ENCODE measurements at regions of chr3 and their contacts with region 1.

Region 1: GRCh38 chr3:50611464-50612233 is at the start of gene CISH:
- DNase-seq: peak; percentile 78 to 83
- ATAC-seq: peak; percentile 65 to 87
- H3K4me3 ChIP-seq: peak within 1 kb of the TSS; percentile 50
- H3K27ac ChIP-seq: peak within 1 kb of the TSS; percentile 72 to 89
- H3K4me1 ChIP-seq: peaks cover 9% of the 10 kb centered on the region
- CTCF ChIP-seq: peak; percentile 15; the same call in 1 of the 3 replicates
- EP300 ChIP-seq: no peak
- POLR2A ChIP-seq: peak; percentile 43; the same call in 1 of the 2 replicates
- RAD21 ChIP-seq: no peak
- polyA plus RNA-seq, gene CISH: 0.43 and 0.95 TPM in 2 replicates

Region 2: DNA sequence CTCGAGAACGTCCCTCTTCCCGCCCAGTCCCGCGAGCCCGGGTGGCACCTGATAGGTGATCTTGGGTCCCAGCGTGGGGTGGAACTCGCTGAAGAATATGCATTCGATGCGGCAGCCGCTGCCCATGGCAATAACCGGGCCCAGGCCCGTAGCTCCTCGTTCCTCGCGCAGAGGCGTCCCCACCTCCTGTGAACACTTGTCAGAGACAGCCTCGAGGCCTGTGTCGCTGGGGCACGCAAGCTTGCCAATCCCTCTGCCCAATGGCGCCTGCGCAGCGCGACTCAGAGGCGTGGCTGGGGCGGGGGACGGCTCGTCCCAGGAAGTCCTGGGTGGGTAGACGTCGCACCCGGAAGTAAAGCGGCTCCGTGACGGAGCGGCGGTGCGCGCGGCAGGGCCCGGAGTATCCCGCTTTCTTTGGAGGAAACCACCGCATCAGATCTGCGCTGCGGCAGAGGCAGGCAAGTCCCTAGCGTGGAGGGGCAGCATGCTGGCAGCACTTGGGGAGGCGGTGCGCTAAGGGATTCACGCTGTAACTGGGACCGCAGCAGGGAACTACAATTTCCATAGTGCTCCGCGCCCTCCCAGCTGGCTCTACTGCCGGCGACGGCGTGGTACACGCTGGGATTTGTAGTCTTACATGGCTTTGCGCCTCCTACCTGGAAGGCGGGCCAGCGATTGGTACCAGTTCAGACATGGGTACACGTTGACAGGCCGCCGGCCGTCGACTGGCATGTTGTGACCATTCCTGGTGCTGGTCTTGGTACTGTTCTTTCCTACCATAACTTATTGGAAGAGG is 260.9 kb before region 1 on chr3 and contains the starts of genes CYB561D2 and NPRL2:
- CTCF ChIA-PET with region 1: interaction called, 32 read pairs
- POLR2A ChIA-PET with region 1: no interaction called
- DNase-seq: peak; percentile 92
- ATAC-seq: peak; percentile 86 to 91
- H3K4me3 ChIP-seq: peak within 1 kb of the TSS; percentile 76
- H3K27ac ChIP-seq: peak within 1 kb of the TSS; percentile 97 to 100
- H3K4me1 ChIP-seq: peaks cover 28% of the 10 kb centered on the region; the same call in 2 of the 3 replicates
- CTCF ChIP-seq: no peak
- EP300 ChIP-seq: no peak
- POLR2A ChIP-seq: peak; percentile 68
- RAD21 ChIP-seq: no peak
- polyA plus RNA-seq, gene CYB561D2: 14.4 and 23.1 TPM in 2 replicates
- polyA plus RNA-seq, gene NPRL2: 19.9 and 28.5 TPM in 2 replicates

Region 3: DNA sequence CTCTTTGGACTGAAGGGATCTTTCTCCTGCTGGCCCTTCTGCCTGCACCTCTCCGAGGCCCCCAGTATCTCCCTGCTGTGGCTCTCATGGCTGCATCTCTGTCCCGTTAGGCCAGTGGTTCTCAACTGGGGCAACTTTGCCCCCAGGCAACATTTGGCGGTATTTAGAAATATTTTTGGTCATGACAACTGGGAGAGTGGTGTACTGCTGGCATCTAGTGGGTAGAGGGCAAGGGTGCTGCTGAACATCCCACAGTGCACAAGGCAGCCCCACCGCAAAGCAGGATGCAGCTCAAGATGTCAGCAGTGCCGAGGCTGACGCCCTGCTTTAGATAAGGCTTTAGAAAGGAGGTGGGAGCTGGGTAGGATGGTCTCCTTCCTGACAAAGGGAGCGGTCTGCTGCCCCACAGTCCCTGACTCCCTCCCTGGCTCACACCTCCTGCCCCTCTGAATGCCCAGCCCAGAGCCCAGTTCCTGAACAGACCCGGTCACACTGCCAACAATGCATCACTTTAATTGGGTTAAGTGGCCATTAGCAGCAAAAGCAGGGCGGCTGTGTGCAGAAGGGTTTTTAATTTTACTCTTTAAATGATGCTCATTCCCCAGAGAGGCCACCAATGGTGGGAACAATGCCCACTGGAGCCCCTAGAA is 183.5 kb before region 1 on chr3:
- CTCF ChIA-PET with region 1: no interaction called
- POLR2A ChIA-PET with region 1: no interaction called
- DNase-seq: peak in 1 of 2 experiments; percentile 11
- ATAC-seq: peak in 1 of 2 experiments; percentile 56; a peak in 2 of 6 replicates
- H3K4me3 ChIP-seq: no peak overlapping the region
- H3K27ac ChIP-seq: no peak overlapping the region
- H3K4me1 ChIP-seq: no peaks in the 10 kb centered on the region
- CTCF ChIP-seq: no peak
- EP300 ChIP-seq: no peak
- POLR2A ChIP-seq: no peak
- RAD21 ChIP-seq: 0 out of 5 replicates have a peak, but pooled peaks of 1 of the 2 experiments have one; percentile 6

Region 4: DNA sequence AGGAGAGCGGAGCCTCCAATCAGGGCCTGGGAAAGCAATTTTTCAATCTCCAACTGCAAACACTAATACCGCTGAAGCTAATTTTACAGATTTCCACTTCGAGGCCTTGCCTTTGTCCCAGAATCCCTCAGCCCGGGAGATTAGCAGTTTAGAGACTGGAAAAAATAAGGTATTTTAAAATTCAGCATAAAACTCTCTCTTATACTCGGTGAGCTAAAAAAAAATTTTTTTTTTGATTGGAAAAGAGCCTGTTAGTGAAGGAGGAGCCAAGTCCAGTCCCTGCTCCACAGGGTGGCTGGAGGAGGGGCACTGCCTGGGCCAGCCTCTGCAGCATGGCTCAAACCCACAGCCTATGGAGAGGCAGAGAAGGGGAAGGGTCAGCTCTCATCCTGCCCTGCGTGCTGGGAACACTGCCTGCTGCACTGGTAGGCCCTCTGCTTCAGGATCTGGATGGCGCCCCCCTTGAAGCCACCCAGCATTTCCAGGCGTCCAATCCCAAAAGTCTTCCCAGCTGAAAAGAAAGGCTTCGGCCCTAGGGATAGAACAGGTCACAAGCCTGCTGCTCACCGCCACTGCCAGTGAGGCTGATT is 157.1 kb before region 1 on chr3:
- CTCF ChIA-PET with region 1: no interaction called
- POLR2A ChIA-PET with region 1: no interaction called
- DNase-seq: no peak
- ATAC-seq: 0 out of 6 replicates have a peak, but pooled peaks of 1 of the 2 experiments have one; percentile 34
- H3K4me3 ChIP-seq: no peak overlapping the region
- H3K27ac ChIP-seq: no peak overlapping the region
- H3K4me1 ChIP-seq: no peaks in the 10 kb centered on the region
- CTCF ChIP-seq: no peak
- EP300 ChIP-seq: no peak
- POLR2A ChIP-seq: no peak
- RAD21 ChIP-seq: no peak

Region 5: GRCh38 chr3:50542177-50543034 is 69.2 kb before region 1 on chr3:
- CTCF ChIA-PET with region 1: interaction called, 10 read pairs
- POLR2A ChIA-PET with region 1: no interaction called
- DNase-seq: peak; percentile 42 to 90
- ATAC-seq: peak; percentile 73 to 92
- H3K4me3 ChIP-seq: no peak overlapping the region
- H3K27ac ChIP-seq: no peak overlapping the region
- H3K4me1 ChIP-seq: no peaks in the 10 kb centered on the region
- CTCF ChIP-seq: peak; percentile 71
- EP300 ChIP-seq: no peak
- POLR2A ChIP-seq: no peak
- RAD21 ChIP-seq: peak; percentile 48 to 67; a peak in 4 of 5 replicates

Region 6: GRCh38 chr3:50587806-50588758 is 23.6 kb before region 1 on chr3:
- CTCF ChIA-PET with region 1: interaction called, 375 read pairs
- POLR2A ChIA-PET with region 1: interaction called, 3 read pairs
- DNase-seq: no peak
- ATAC-seq: no peak; a peak in 1 of 6 replicates
- H3K4me3 ChIP-seq: no peak overlapping the region
- H3K27ac ChIP-seq: no peak overlapping the region
- H3K4me1 ChIP-seq: peaks cover 14% of the 10 kb centered on the region
- CTCF ChIP-seq: no peak
- EP300 ChIP-seq: no peak
- POLR2A ChIP-seq: no peak
- RAD21 ChIP-seq: no peak

Region 7: GRCh38 chr3:50652709-50653108 is 41.1 kb after region 1 on chr3:
- CTCF ChIA-PET with region 1: interaction called, 22 read pairs
- POLR2A ChIA-PET with region 1: no interaction called
- DNase-seq: peak; percentile 16 to 18
- ATAC-seq: peak in 1 of 2 experiments; percentile 73; a peak in 3 of 6 replicates
- H3K4me3 ChIP-seq: no peak overlapping the region
- H3K27ac ChIP-seq: no peak overlapping the region
- H3K4me1 ChIP-seq: no peaks in the 10 kb centered on the region
- CTCF ChIP-seq: peak; percentile 24; the same call in 1 of the 3 replicates
- EP300 ChIP-seq: no peak
- POLR2A ChIP-seq: no peak
- RAD21 ChIP-seq: peak; percentile 32 to 48; a peak in 4 of 5 replicates

Region 8: GRCh38 chr3:51311055-51311454 is 699.4 kb after region 1 on chr3:
- CTCF ChIA-PET with region 1: interaction called, 16 read pairs
- POLR2A ChIA-PET with region 1: no interaction called
- DNase-seq: peak; percentile 20 to 21
- ATAC-seq: peak; percentile 70 to 72; a peak in 5 of 6 replicates
- H3K4me3 ChIP-seq: no peak overlapping the region
- H3K27ac ChIP-seq: no peak overlapping the region
- H3K4me1 ChIP-seq: no peaks in the 10 kb centered on the region
- CTCF ChIP-seq: peak; percentile 40
- EP300 ChIP-seq: no peak
- POLR2A ChIP-seq: no peak
- RAD21 ChIP-seq: peak; percentile 15 to 32; a peak in 1 of 5 replicates

Region 9: DNA sequence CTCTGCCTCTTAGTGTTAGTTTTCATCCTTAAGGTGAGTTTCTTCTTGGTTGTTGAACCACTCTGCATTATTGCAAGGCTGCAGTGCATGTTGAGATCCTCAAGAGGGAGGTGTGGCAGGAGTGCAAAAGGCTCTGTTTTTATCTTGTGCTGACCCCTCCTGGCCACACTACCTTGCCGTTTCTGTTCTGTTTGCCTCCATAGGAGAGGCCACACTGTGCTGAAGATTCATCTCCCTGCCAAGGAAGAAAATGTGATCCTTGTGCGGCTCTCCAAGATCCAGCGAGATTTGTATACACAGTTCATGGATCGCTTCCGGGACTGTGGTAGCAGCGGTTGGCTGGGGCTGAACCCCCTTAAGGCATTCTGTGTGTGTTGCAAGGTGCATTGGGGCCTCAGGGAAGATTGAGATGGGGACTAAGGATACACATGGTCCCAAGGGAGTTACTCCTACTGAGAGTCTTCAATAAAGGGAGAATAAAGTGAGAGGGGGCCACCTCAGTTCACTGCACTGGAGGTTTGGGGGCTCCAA is 1026.4 kb after region 1 on chr3:
- CTCF ChIA-PET with region 1: interaction called, 12 read pairs
- POLR2A ChIA-PET with region 1: no interaction called
- DNase-seq: peak; percentile 72 to 83
- ATAC-seq: peak; percentile 99
- H3K4me3 ChIP-seq: no peak overlapping the region
- H3K27ac ChIP-seq: no peak overlapping the region
- H3K4me1 ChIP-seq: no peaks in the 10 kb centered on the region
- CTCF ChIP-seq: peak; percentile 80
- EP300 ChIP-seq: no peak
- POLR2A ChIP-seq: no peak
- RAD21 ChIP-seq: peak; percentile 58 to 76

Measured in A549 (cell line).